Activated CD4-positive, alpha-beta T cell treated with anti-CD3 and anti-CD28 coated beads, Interleukin-2, amount 10 ng/mL, durations not matched to agents 7 days and 5 days (primary cell): ENCODE measurements at regions of chr21 and their contacts with region 1.

Region 1: GRCh38 chr21:44043613-44044012 is 31.5 kb downstream of the TRAPPC10 start:
- DNase-seq: no peak
- H3K4me3 Mint-ChIP-seq: no peak overlapping the region
- H3K27ac Mint-ChIP-seq: no peak overlapping the region
- H3K4me1 Mint-ChIP-seq: peaks cover 16% of the 10 kb centered on the region
- H3K27me3 Mint-ChIP-seq: no peaks in the 10 kb centered on the region

Region 2: DNA sequence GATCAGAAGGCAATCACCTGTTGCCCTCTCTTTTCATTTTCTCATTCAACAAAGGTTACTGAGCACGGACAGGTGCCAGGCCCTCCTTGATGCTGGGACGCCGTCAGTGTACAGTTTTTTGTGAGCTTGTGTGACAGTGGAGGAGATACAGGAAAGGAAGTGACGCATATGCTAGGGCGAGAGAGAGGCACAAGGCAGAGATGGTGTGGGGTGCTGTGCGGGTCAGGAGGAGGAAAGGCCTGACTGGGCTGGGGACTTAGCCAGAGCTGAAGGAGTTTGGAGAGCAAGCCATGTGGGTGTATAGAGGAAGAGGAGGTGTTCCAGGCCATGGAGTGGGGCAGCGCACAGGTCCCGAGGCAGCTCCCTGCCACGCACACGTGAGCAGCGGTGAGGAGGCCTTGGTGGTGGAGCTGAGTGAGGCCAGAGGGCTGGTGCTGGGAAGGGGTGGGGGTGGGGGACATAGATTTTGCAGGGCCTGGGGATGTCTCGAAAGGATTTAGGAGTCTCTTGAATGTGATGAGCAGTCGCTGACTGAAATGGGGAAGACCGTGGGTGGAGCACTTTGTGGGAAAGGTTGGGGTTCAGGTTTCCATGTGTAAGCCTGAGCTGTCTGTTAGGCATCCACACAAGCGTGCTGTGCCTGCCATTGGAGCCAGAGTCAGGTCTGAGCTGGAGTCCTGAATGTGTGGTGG is 14.5 kb after region 1 on chr21:
- CTCF ChIA-PET with region 1: interaction called, 10 read pairs
- POLR2A ChIA-PET with region 1: interaction called, 4 read pairs
- DNase-seq: peak; percentile 21
- H3K4me3 Mint-ChIP-seq: peak overlapping the region; percentile 53
- H3K27ac Mint-ChIP-seq: peak overlapping the region; percentile 90
- H3K4me1 Mint-ChIP-seq: peaks cover 16% of the 10 kb centered on the region
- H3K27me3 Mint-ChIP-seq: no peaks in the 10 kb centered on the region

Region 3: GRCh38 chr21:44074311-44074958 is 30.8 kb after region 1 on chr21:
- CTCF ChIA-PET with region 1: no interaction called
- POLR2A ChIA-PET with region 1: no interaction called
- DNase-seq: no peak
- H3K4me3 Mint-ChIP-seq: no peak overlapping the region
- H3K27ac Mint-ChIP-seq: peak overlapping the region; percentile 9
- H3K4me1 Mint-ChIP-seq: peaks cover 32% of the 10 kb centered on the region
- H3K27me3 Mint-ChIP-seq: no peaks in the 10 kb centered on the region